ENCODE measurements at regions of chr1 and their contacts with region 1.

Region 1: DNA sequence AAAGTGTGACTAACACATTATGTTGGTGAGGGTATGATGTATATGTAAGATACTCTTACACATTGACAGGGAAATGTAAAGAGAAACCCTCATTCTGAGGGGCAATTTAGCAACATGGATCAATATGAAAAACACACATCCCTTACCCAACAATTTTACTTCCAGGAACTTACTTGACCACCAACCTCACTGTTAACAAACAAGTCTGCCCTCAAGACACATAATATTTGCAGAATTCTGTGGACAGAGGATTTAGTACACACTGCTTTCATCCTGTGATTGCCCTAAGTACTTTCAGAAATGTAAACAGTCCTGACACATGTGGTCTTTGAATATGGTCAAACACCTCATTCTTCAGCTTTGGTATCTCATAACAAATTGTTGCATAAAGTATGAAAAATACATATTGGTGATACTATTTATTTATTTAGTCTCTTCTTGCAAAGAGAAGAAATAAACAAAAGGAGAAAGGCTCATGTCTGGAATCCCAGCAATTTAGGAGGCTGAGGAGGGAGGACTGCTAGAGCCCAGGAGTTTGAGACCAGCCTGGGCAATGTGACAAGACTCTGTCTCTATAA is 6.9 kb downstream of the USP48 start:
- DNase-seq: no peak
- H3K4me3 ChIP-seq: no peak overlapping the region
- H3K27ac ChIP-seq: no peak overlapping the region
- H3K4me1 ChIP-seq: no peaks in the 10 kb centered on the region
- H3K27me3 ChIP-seq: no peaks in the 10 kb centered on the region
- CTCF ChIP-seq: no peak

Region 2: GRCh38 chr1:21794656-21795055 is 18.6 kb after region 1 on chr1:
- CTCF ChIA-PET with region 1: interaction called, 10 read pairs
- POLR2A ChIA-PET with region 1: no interaction called
- intact Hi-C with region 1: no loop called
- DNase-seq: no peak
- H3K4me3 ChIP-seq: no peak overlapping the region
- H3K27ac ChIP-seq: no peak overlapping the region
- H3K4me1 ChIP-seq: no peaks in the 10 kb centered on the region
- H3K27me3 ChIP-seq: no peaks in the 10 kb centered on the region
- CTCF ChIP-seq: no peak